Right ventricle myocardium superior (tissue), 1 donor: ENCODE measurements at regions of chr2 and their contacts with region 1.

Region 1: GRCh38 chr2:231191896-231192872 is 6.2 kb upstream of the ARMC9 start:
- DNase-seq: peak; percentile 83
- ATAC-seq: peak; percentile 66

Region 2: GRCh38 chr2:231104115-231104713 is 88.0 kb before region 1 on chr2:
- intact Hi-C with region 1: loop called (anchors 5 kb)
- DNase-seq: no peak
- ATAC-seq: peak; percentile 88